Vagina (tissue), 2 donors: ENCODE measurements at regions of chr11 and their contacts with region 1.

Region 1: GRCh38 chr11:3037040-3037944 is 19.9 kb downstream of the CARS1 start:
- DNase-seq: no peak
- H3K4me3 ChIP-seq: no peak overlapping the region
- H3K27ac ChIP-seq: no peak overlapping the region
- H3K4me1 ChIP-seq: no peaks in the 10 kb centered on the region
- H3K27me3 ChIP-seq: no peaks in the 10 kb centered on the region
- CTCF ChIP-seq: peak; percentile 66 to 76 (median 75)
- POLR2A ChIP-seq: no peak

Region 2: DNA sequence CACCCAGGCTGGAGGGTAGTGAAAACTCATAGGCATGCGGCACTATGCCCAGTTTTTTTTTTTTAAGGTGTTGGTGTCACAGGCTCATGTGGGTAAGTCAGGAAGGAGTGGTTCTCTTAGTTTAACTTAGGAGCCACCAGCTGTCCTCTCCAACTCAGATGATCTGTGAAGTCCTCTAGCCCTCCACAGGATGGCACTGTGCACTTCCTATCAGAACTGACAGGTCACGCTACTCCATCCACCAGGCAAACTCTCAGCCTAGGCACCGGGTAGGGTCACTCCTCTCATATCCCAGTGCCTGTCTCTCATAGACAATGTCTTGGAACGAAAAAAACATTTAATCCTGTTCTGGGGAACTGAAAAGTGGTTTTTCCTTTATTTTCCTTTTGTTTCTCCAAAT is 61.7 kb before region 1 on chr11:
- intact Hi-C with region 1: no loop called
- DNase-seq: no peak
- H3K4me3 ChIP-seq: no peak overlapping the region
- H3K27ac ChIP-seq: no peak overlapping the region
- H3K4me1 ChIP-seq: peaks cover 9% of the 10 kb centered on the region
- H3K27me3 ChIP-seq: no peaks in the 10 kb centered on the region
- CTCF ChIP-seq: peak in 1 of 3 experiments; percentile 14
- POLR2A ChIP-seq: no peak

Region 3: GRCh38 chr11:3091791-3092602 is 54.7 kb after region 1 on chr11:
- intact Hi-C with region 1: loop called (anchors 5 kb)
- DNase-seq: peak in 1 of 2 donors; percentile 86
- H3K4me3 ChIP-seq: no peak overlapping the region
- H3K27ac ChIP-seq: peak overlapping the region; percentile 42
- H3K4me1 ChIP-seq: peaks cover 22% of the 10 kb centered on the region
- H3K27me3 ChIP-seq: no peaks in the 10 kb centered on the region
- CTCF ChIP-seq: peak; percentile 96 to 98 (median 97)
- POLR2A ChIP-seq: no peak

Region 4: GRCh38 chr11:3217676-3218482 is 180.6 kb after region 1 on chr11:
- intact Hi-C with region 1: loop called (anchors 5 kb)
- DNase-seq: no peak
- H3K4me3 ChIP-seq: no peak overlapping the region
- H3K27ac ChIP-seq: no peak overlapping the region
- H3K4me1 ChIP-seq: peaks cover 16% of the 10 kb centered on the region
- H3K27me3 ChIP-seq: no peaks in the 10 kb centered on the region
- CTCF ChIP-seq: no peak
- POLR2A ChIP-seq: no peak